A549 (cell line): ENCODE measurements at regions of chr16 and their contacts with region 1.

Region 1: GRCh38 chr16:9008601-9009260 is 45.0 kb upstream of the USP7 start:
- DNase-seq: peak; percentile 74 to 97
- ATAC-seq: peak; percentile 100
- H3K4me3 ChIP-seq: no peak overlapping the region
- H3K27ac ChIP-seq: peak overlapping the region; percentile 59 to 79
- H3K4me1 ChIP-seq: peaks cover 3% of the 10 kb centered on the region; the same call in 1 of the 3 replicates
- CTCF ChIP-seq: peak; percentile 83
- EP300 ChIP-seq: no peak
- POLR2A ChIP-seq: no peak
- RAD21 ChIP-seq: peak; percentile 87

Region 2: DNA sequence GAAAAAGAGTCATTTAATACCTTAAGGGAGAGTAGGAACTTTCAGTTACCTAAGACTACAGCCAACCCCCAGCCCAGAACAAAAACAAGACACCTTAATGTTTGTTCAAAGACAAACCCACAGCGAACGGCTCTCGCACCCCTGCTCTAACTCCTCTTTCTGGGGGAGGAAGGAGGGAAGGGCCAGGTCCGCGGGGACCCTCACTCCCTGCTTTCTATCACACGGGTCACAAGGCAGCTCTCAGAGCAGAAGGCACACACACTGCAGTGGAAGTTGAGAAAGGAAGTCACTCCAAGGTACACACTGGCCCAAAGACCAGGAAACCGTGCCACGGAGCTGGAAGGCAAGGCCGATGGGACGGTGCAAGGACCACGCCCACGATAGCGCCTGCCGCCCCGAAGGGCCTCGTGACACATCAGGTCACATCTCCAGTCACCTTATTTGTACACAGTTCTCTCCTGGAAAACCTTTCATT is 116.6 kb before region 1 on chr16:
- CTCF ChIA-PET with region 1: interaction called, 11 read pairs
- POLR2A ChIA-PET with region 1: no interaction called
- DNase-seq: no peak
- ATAC-seq: no peak
- H3K4me3 ChIP-seq: no peak overlapping the region
- H3K27ac ChIP-seq: no peak overlapping the region
- H3K4me1 ChIP-seq: no peaks in the 10 kb centered on the region
- CTCF ChIP-seq: no peak
- EP300 ChIP-seq: no peak
- POLR2A ChIP-seq: no peak
- RAD21 ChIP-seq: no peak

Region 3: GRCh38 chr16:8905168-8905762 is 103.5 kb before region 1 on chr16:
- CTCF ChIA-PET with region 1: interaction called, 20 read pairs
- POLR2A ChIA-PET with region 1: no interaction called
- DNase-seq: peak; percentile 36 to 69
- ATAC-seq: peak; percentile 87 to 89
- H3K4me3 ChIP-seq: no peak overlapping the region
- H3K27ac ChIP-seq: no peak overlapping the region
- H3K4me1 ChIP-seq: peaks cover 6% of the 10 kb centered on the region; the same call in 1 of the 3 replicates
- CTCF ChIP-seq: peak; percentile 27
- EP300 ChIP-seq: no peak
- POLR2A ChIP-seq: no peak
- RAD21 ChIP-seq: peak; percentile 57 to 73

Region 4: DNA sequence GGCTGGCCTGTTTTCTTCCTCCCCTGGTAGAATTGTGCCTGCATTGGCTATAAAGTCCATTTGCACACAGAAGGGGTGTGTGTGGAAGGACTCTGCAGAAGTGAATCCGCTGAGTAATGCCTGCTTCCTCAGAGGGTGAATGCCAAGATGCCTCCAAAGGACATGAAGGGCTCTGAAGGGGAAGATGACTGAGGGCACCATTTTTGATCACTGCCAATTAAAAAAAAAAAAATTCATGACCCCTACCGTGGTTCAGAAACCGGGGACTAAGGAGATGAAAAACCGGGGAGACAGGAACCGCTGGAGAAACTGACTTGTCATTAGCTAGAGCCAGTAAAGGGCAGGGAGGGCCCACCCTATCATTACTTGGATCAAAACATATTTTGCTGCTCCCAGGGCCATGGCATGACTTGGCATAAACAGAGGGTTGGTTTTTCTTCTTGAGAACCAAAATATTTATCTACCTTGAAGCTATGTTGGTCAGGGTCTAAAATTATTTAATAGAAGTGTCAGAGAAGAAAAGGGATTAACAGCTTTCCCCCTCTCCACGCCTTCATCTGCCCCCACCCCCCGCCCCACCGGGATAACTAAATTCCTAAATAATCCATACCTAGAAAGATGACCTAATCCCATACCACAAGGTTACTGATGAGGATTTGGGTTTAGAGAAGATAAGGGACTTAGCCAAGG is 41.5 kb before region 1 on chr16:
- CTCF ChIA-PET with region 1: interaction called, 10 read pairs
- POLR2A ChIA-PET with region 1: no interaction called
- DNase-seq: peak in 1 of 2 experiments; percentile 36
- ATAC-seq: 0 out of 6 replicates have a peak, but pooled peaks of 1 of the 2 experiments have one; percentile 5
- H3K4me3 ChIP-seq: no peak overlapping the region
- H3K27ac ChIP-seq: peak overlapping the region; percentile 12 to 74; a peak in 4 of 6 replicates
- H3K4me1 ChIP-seq: peaks cover 12% of the 10 kb centered on the region; the same call in 2 of the 3 replicates
- CTCF ChIP-seq: no peak
- EP300 ChIP-seq: no peak
- POLR2A ChIP-seq: no peak
- RAD21 ChIP-seq: no peak

Region 5: DNA sequence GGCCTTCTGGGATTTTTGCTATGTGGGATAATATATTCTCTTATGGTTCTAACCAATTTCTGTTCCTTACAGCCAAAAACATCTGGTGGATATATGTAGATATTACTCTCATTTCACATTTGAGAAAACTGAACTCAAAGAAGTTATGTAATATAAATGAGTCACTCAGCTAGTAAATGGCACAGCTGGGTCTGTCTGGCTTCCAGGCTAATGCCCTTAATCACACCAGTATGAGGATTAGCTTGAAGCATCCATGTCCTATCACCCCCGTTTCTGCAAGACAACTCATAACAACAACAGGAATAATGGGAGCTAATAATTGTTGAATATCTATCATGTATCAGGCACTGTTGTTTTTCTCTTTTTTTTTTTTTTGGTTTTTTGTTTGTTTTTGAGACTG is 10.6 kb before region 1 on chr16:
- CTCF ChIA-PET with region 1: interaction called, 73 read pairs
- POLR2A ChIA-PET with region 1: no interaction called
- DNase-seq: no peak
- ATAC-seq: peak; percentile 46 to 68; a peak in 2 of 6 replicates
- H3K4me3 ChIP-seq: no peak overlapping the region
- H3K27ac ChIP-seq: no peak overlapping the region
- H3K4me1 ChIP-seq: peaks cover 3% of the 10 kb centered on the region; the same call in 1 of the 3 replicates
- CTCF ChIP-seq: no peak
- EP300 ChIP-seq: no peak
- POLR2A ChIP-seq: no peak
- RAD21 ChIP-seq: no peak

Region 6: GRCh38 chr16:9033125-9033830 is 24.5 kb after region 1 on chr16:
- CTCF ChIA-PET with region 1: interaction called, 16 read pairs
- POLR2A ChIA-PET with region 1: no interaction called
- DNase-seq: peak; percentile 81 to 83
- ATAC-seq: peak; percentile 83 to 95; a peak in 5 of 6 replicates
- H3K4me3 ChIP-seq: no peak overlapping the region
- H3K27ac ChIP-seq: peak overlapping the region in 1 of 2 experiments; percentile 14; a peak in 1 of 6 replicates
- H3K4me1 ChIP-seq: no peaks in the 10 kb centered on the region
- CTCF ChIP-seq: peak; percentile 61
- EP300 ChIP-seq: no peak
- POLR2A ChIP-seq: no peak
- RAD21 ChIP-seq: peak; percentile 38 to 57; a peak in 2 of 5 replicates

Region 7: GRCh38 chr16:9090960-9091866 is 82.5 kb after region 1 on chr16 and contains the start of gene HAPSTR1:
- CTCF ChIA-PET with region 1: interaction called, 8 read pairs
- POLR2A ChIA-PET with region 1: interaction called, 11 read pairs
- DNase-seq: peak; percentile 95 to 100
- ATAC-seq: peak; percentile 89 to 96
- H3K4me3 ChIP-seq: peak within 1 kb of the TSS; percentile 89
- H3K27ac ChIP-seq: peak within 1 kb of the TSS; percentile 94 to 98
- H3K4me1 ChIP-seq: peaks cover 36% of the 10 kb centered on the region
- CTCF ChIP-seq: no peak
- EP300 ChIP-seq: no peak
- POLR2A ChIP-seq: peak; percentile 99
- RAD21 ChIP-seq: peak; percentile 5 to 13; a peak in 2 of 5 replicates
- polyA plus RNA-seq, gene HAPSTR1: 36.9 and 41.8 TPM in 2 replicates